ENCODE measurements at regions of chr2 and their contacts with region 1.

Region 1: GRCh38 chr2:189661148-189661956 is at the start of gene ASNSD1:
- DNase-seq: peak; percentile 99
- H3K4me3 Mint-ChIP-seq: no peak within 1 kb of the TSS
- H3K27ac Mint-ChIP-seq: no peak within 1 kb of the TSS
- H3K4me1 Mint-ChIP-seq: peaks cover 48% of the 10 kb centered on the region
- H3K27me3 Mint-ChIP-seq: no peaks in the 10 kb centered on the region
- total RNA-seq, gene ASNSD1: 58.4 and 61.2 TPM in 2 replicates

Region 2: DNA sequence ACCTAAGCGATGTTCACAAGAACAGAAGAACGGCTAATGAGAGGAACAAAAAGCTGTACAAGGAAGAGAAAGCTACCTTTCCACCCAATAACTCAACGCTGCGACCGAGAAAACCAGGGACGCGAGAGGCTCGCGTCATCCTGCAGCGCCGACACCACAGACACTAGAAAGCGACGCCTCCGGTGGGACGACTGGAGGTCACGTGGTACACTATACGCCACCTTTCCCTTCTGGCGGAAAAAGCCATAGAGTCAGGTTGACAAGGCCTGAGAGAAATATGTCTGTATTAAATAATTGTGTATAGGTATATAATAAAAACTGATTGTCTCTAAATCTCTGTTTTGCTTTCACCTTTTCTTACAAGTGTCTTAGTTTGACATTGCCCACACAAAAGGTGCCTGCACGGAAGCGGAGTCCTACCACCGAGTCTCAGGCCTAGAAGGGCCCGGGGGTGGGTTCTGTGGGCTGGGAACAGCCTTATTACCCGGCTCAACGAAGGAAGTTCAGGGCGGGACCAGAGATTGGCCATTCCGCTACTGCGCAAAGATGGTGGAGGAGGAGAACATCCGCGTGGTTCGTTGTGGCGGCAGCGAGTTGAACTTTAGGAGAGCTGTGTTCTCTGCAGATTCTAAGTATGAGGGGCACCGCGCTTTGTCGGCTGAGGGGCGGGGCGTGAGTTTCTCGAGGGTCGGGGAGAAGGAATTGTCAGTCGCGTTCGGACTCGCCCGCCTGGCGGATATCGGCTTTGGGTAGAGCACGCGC is 220.2 kb before region 1 on chr2 and contains the start of gene WDR75:
- intact Hi-C with region 1: loop called (anchors 1 kb)
- DNase-seq: peak; percentile 89
- H3K4me3 Mint-ChIP-seq: no peak within 1 kb of the TSS
- H3K27ac Mint-ChIP-seq: peak within 1 kb of the TSS; percentile 99
- H3K4me1 Mint-ChIP-seq: peaks cover 8% of the 10 kb centered on the region
- H3K27me3 Mint-ChIP-seq: peaks cover 3% of the 10 kb centered on the region
- total RNA-seq, gene WDR75: 108 and 112 TPM in 2 replicates

Region 3: GRCh38 chr2:189641590-189641989 is 19.8 kb before region 1 on chr2:
- intact Hi-C with region 1: loop called (anchors 1 kb)
- DNase-seq: no peak
- H3K4me3 Mint-ChIP-seq: no peak overlapping the region
- H3K27ac Mint-ChIP-seq: peak overlapping the region; percentile 58
- H3K4me1 Mint-ChIP-seq: peaks cover 8% of the 10 kb centered on the region
- H3K27me3 Mint-ChIP-seq: no peaks in the 10 kb centered on the region

Region 4: GRCh38 chr2:189698020-189698887 is 36.9 kb after region 1 on chr2:
- intact Hi-C with region 1: loop called (anchors 1 kb)
- DNase-seq: peak; percentile 6
- H3K4me3 Mint-ChIP-seq: no peak overlapping the region
- H3K27ac Mint-ChIP-seq: no peak overlapping the region
- H3K4me1 Mint-ChIP-seq: no peaks in the 10 kb centered on the region
- H3K27me3 Mint-ChIP-seq: no peaks in the 10 kb centered on the region

Region 5: GRCh38 chr2:189783927-189784867 is 122.8 kb after region 1 on chr2 and contains the starts of genes ORMDL1 and PMS1:
- intact Hi-C with region 1: loop called (anchors 1 kb)
- DNase-seq: peak; percentile 94
- H3K4me3 Mint-ChIP-seq: peak within 1 kb of the TSS; percentile 92
- H3K27ac Mint-ChIP-seq: peak within 1 kb of the TSS; percentile 93
- H3K4me1 Mint-ChIP-seq: peaks cover 40% of the 10 kb centered on the region
- H3K27me3 Mint-ChIP-seq: no peaks in the 10 kb centered on the region
- total RNA-seq, gene ORMDL1: 78.7 and 80.1 TPM in 2 replicates
- total RNA-seq, gene PMS1: 54.4 and 55.9 TPM in 2 replicates

Region 6: DNA sequence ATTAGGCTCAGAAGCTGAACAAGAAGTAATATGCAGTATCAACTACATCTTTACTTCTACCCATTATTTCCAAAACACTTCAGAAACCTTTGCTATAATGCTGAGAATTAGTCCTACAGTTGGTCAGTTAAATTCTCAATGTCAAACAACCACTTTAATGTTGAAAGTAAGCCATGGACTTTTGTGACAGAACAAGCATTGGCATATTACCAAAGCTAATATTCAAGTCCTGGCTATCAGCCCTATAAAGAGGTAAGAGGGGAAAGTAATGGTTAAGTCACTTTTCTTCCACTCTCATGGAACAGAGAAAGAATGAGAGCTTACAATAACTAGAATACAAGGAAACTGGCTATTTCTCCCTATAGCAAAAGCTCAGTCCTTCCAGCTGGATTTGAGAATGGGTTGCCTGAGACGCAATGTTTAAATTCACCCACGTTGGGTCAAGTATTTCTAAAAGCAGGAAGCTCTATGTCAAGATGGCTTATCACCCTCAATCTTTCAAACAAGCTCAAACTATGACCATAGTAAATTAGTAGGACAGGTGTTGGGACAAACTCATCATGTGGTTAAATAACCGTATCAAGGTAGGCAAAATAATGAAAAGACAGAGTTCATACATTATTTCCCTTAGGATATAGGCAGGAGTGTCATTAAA is 715.4 kb after region 1 on chr2:
- intact Hi-C with region 1: loop called (anchors 2 kb)
- DNase-seq: no peak
- H3K4me3 Mint-ChIP-seq: no peak overlapping the region
- H3K27ac Mint-ChIP-seq: no peak overlapping the region
- H3K4me1 Mint-ChIP-seq: no peaks in the 10 kb centered on the region
- H3K27me3 Mint-ChIP-seq: peaks cover 2% of the 10 kb centered on the region

Region 7: GRCh38 chr2:191013932-191014652 is 1352.7 kb after region 1 on chr2 and contains the start of gene STAT1:
- intact Hi-C with region 1: loop called (anchors 10 kb)
- DNase-seq: peak; percentile 97
- H3K4me3 Mint-ChIP-seq: no peak within 1 kb of the TSS
- H3K27ac Mint-ChIP-seq: no peak within 1 kb of the TSS
- H3K4me1 Mint-ChIP-seq: peaks cover 49% of the 10 kb centered on the region
- H3K27me3 Mint-ChIP-seq: no peaks in the 10 kb centered on the region
- total RNA-seq, gene STAT1: 129 and 136 TPM in 2 replicates